CD8-positive, alpha-beta T cell (primary cell): ENCODE measurements at regions of chr1 and their contacts with region 1.

Region 1: GRCh38 chr1:202998836-202999750 is 8.1 kb upstream of the TMEM183A start:
- DNase-seq: peak; percentile 30 to 79 (median 71)
- ATAC-seq: peak; percentile 70
- H3K4me3 ChIP-seq: no peak overlapping the region
- H3K4me3 Mint-ChIP-seq: peak overlapping the region; percentile 32
- H3K27ac ChIP-seq: no peak overlapping the region
- H3K27ac Mint-ChIP-seq: no peak overlapping the region
- H3K4me1 ChIP-seq: no peaks in the 10 kb centered on the region
- H3K4me1 Mint-ChIP-seq: peaks cover 4% of the 10 kb centered on the region
- H3K27me3 ChIP-seq: peaks cover 0 to 3% of the 10 kb centered on the region in 2 experiments
- H3K27me3 Mint-ChIP-seq: peaks cover 23% of the 10 kb centered on the region
- CTCF ChIP-seq: peak; percentile 85

Region 2: GRCh38 chr1:202750758-202751157 is 248.3 kb before region 1 on chr1:
- CTCF ChIA-PET with region 1: interaction called, 29 read pairs
- POLR2A ChIA-PET with region 1: no interaction called
- intact Hi-C with region 1: loop called (anchors 1 to 2 kb)
- DNase-seq: peak in 2 of 9 experiments; percentile 7 to 22
- ATAC-seq: no peak
- H3K4me3 ChIP-seq: no peak overlapping the region
- H3K4me3 Mint-ChIP-seq: no peak overlapping the region
- H3K27ac ChIP-seq: no peak overlapping the region
- H3K27ac Mint-ChIP-seq: no peak overlapping the region
- H3K4me1 ChIP-seq: no peaks in the 10 kb centered on the region
- H3K4me1 Mint-ChIP-seq: no peaks in the 10 kb centered on the region
- H3K27me3 ChIP-seq: no peaks in the 10 kb centered on the region
- H3K27me3 Mint-ChIP-seq: no peaks in the 10 kb centered on the region
- CTCF ChIP-seq: peak; percentile 44

Region 3: DNA sequence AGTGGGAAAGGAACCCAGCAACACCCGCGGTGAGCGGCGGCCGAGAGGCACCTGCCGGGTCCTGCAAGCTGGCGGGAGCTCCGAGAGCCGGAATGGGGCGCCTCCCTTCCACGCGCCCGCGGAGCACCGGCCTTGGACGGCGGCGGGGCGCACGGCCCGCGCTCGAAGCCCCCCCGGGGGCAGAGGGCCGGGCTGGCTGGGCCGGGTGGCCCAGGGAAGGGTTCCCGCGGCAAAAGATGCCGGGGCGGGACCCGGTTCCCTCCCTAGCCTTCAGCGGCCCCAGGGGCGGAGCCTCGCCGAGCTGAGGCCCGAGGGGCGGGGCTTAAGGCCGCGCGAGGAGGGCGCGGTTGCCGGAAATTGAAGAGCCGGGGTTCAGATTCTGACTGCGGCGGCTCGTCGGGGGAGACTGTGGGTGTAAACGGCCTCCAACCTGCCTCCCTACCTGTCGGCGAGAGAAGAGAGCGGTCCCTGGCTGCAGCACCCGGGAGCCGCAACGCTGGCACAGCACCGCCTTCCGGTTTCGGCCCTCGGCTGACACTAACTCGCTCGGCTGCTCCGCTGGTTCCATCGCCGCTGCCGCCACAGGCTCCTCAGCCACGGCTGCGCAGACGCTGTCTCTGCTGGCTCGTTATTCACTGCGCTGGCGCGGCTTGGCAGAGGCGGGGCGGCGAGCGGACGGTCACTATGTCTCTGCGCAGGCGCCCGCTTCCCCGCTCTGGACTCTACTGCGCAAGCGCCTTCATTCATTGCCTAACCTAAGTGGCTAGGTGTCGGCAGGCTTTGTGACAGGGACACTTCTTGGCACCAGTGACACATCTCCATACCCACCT is 110.3 kb before region 1 on chr1 and contains the start of gene RABIF:
- CTCF ChIA-PET with region 1: interaction called, 3 read pairs
- POLR2A ChIA-PET with region 1: interaction called, 5 read pairs
- intact Hi-C with region 1: loop called (anchors 1 to 2 kb)
- DNase-seq: peak; percentile 91 to 98 (median 96)
- ATAC-seq: peak; percentile 92
- H3K4me3 ChIP-seq: peak within 1 kb of the TSS; percentile 84 to 97
- H3K4me3 Mint-ChIP-seq: peak within 1 kb of the TSS; percentile 94
- H3K27ac ChIP-seq: peak within 1 kb of the TSS; percentile 92 to 94
- H3K27ac Mint-ChIP-seq: peak within 1 kb of the TSS; percentile 96
- H3K4me1 ChIP-seq: peaks cover 18% of the 10 kb centered on the region
- H3K4me1 Mint-ChIP-seq: peaks cover 30% of the 10 kb centered on the region
- H3K27me3 ChIP-seq: no peaks in the 10 kb centered on the region
- H3K27me3 Mint-ChIP-seq: no peaks in the 10 kb centered on the region
- CTCF ChIP-seq: no peak
- total RNA-seq, gene RABIF: 10.1 to 10.8 TPM

Region 4: GRCh38 chr1:202957733-202958543 is 41.2 kb before region 1 on chr1 and contains the start of gene ADIPOR1:
- CTCF ChIA-PET with region 1: interaction called, 5 read pairs
- POLR2A ChIA-PET with region 1: no interaction called
- intact Hi-C with region 1: loop called (anchors 2 to 5 kb)
- DNase-seq: peak; percentile 89 to 96 (median 94)
- ATAC-seq: peak; percentile 97
- H3K4me3 ChIP-seq: peak within 1 kb of the TSS; percentile 89 to 93
- H3K4me3 Mint-ChIP-seq: peak within 1 kb of the TSS; percentile 81
- H3K27ac ChIP-seq: peak within 1 kb of the TSS; percentile 89 to 94
- H3K27ac Mint-ChIP-seq: peak within 1 kb of the TSS; percentile 92
- H3K4me1 ChIP-seq: peaks cover 36% of the 10 kb centered on the region
- H3K4me1 Mint-ChIP-seq: peaks cover 46% of the 10 kb centered on the region
- H3K27me3 ChIP-seq: no peaks in the 10 kb centered on the region
- H3K27me3 Mint-ChIP-seq: no peaks in the 10 kb centered on the region
- CTCF ChIP-seq: no peak
- total RNA-seq, gene ADIPOR1: 106 to 117 TPM

Region 5: DNA sequence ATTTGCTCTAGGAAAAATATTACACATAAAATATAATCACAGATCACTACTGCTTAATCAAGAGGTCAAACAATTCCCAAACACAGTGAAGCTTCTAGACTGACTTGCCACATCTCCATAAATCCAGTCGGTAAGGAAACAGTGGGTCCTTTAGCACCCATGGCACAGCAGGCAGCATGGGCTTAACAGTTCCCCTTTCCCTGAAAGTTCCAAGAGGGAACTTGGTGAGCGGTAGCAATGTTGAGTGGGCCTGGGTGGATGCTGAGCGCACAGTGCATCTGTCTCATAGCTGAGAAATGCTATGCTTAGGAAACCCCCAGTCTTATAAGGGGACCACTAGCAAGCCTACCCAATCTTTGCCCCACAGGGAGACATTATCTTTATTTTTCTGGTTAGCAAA is 24.2 kb before region 1 on chr1:
- CTCF ChIA-PET with region 1: interaction called, 27 read pairs
- POLR2A ChIA-PET with region 1: no interaction called
- intact Hi-C with region 1: no loop called
- DNase-seq: no peak
- ATAC-seq: no peak
- H3K4me3 ChIP-seq: no peak overlapping the region
- H3K4me3 Mint-ChIP-seq: no peak overlapping the region
- H3K27ac ChIP-seq: no peak overlapping the region
- H3K27ac Mint-ChIP-seq: no peak overlapping the region
- H3K4me1 ChIP-seq: no peaks in the 10 kb centered on the region
- H3K4me1 Mint-ChIP-seq: no peaks in the 10 kb centered on the region
- H3K27me3 ChIP-seq: no peaks in the 10 kb centered on the region
- H3K27me3 Mint-ChIP-seq: peaks cover 26% of the 10 kb centered on the region
- CTCF ChIP-seq: no peak